ENCODE measurements at regions of chr20 and their contacts with region 1.

Region 1: GRCh38 chr20:32207626-32208498 is at the starts of genes PLAGL2 and POFUT1:
- DNase-seq: peak; percentile 36 to 93
- H3K4me3 ChIP-seq: peak within 1 kb of the TSS; percentile 95 to 97
- H3K27ac ChIP-seq: peak within 1 kb of the TSS; percentile 77 to 78
- H3K4me1 ChIP-seq: peaks cover 0 to 33% of the 10 kb centered on the region in 2 donors
- H3K27me3 ChIP-seq: no peaks in the 10 kb centered on the region
- CTCF ChIP-seq: peak in 1 of 3 experiments; percentile 13
- total RNA-seq, gene PLAGL2: 6.7 TPM
- total RNA-seq, gene POFUT1: 29.8 TPM

Region 2: DNA sequence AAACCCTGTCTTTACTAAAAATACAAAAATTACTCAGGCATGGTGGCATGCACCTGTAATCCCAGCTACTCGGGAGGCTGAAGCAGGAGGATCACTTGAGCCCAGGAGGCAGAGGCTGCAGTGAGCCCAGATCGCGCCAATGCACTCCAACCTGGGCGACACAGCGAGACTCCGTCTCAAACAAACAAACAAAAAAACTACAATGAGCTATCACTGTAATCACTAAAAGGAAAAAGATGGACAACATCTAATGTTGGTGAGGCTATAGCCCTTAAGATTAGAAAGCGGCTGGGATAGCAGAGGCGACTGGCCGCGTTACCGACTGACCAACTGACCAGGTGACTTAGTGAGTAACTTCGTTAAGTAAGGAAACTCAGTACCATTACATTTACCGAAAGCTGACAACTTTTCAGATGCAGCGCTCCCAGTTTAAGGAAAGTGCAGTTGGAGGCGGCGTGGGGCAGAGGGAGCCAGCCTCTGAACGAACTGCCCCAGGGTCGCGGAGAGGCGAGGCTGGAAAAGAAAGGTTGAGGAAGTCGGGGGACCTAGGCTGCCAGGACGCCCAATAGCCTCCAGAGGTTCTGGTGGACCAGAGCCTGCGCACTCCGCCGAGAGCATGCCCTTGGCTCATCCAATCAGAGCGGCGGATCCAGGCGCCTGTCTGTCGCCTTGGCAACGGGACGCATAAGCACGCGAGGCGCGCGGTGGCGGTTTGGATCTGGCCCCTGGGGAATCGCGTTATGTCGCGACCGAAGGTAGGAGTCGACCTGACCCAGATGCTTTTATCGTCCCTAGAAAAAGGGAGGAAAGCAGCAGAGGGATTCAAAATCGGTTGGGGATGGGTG is 328.5 kb before region 1 on chr20:
- intact Hi-C with region 1: loop called (anchors 10 kb)
- DNase-seq: peak; percentile 87 to 98
- H3K4me3 ChIP-seq: peak overlapping the region; percentile 62 to 63
- H3K27ac ChIP-seq: peak overlapping the region; percentile 59 to 76
- H3K4me1 ChIP-seq: peaks cover 0 to 4% of the 10 kb centered on the region in 2 donors
- H3K27me3 ChIP-seq: no peaks in the 10 kb centered on the region
- CTCF ChIP-seq: peak in 1 of 3 experiments; percentile 16

Region 3: GRCh38 chr20:32109392-32110172 is 98.3 kb before region 1 on chr20 and contains the start of gene TM9SF4:
- intact Hi-C with region 1: loop called (anchors 1 kb)
- DNase-seq: peak; percentile 51 to 94
- H3K4me3 ChIP-seq: peak within 1 kb of the TSS; percentile 88 to 93
- H3K27ac ChIP-seq: peak within 1 kb of the TSS; percentile 99 to 100
- H3K4me1 ChIP-seq: peaks cover 8 to 20% of the 10 kb centered on the region in 2 donors
- H3K27me3 ChIP-seq: no peaks in the 10 kb centered on the region
- CTCF ChIP-seq: no peak
- total RNA-seq, gene TM9SF4: 29.2 TPM

Region 4: GRCh38 chr20:32249030-32249738 is 41.3 kb after region 1 on chr20:
- intact Hi-C with region 1: no loop called
- DNase-seq: no peak
- H3K4me3 ChIP-seq: no peak overlapping the region
- H3K27ac ChIP-seq: no peak overlapping the region
- H3K4me1 ChIP-seq: no peaks in the 10 kb centered on the region
- H3K27me3 ChIP-seq: no peaks in the 10 kb centered on the region
- CTCF ChIP-seq: no peak

Region 5: GRCh38 chr20:32277361-32278198 is 69.7 kb after region 1 on chr20 and contains the start of gene KIF3B:
- intact Hi-C with region 1: loop called (anchors 5 kb)
- DNase-seq: peak; percentile 54 to 92
- H3K4me3 ChIP-seq: peak within 1 kb of the TSS; percentile 87 to 94
- H3K27ac ChIP-seq: peak within 1 kb of the TSS; percentile 65 to 67
- H3K4me1 ChIP-seq: peaks cover 0 to 13% of the 10 kb centered on the region in 2 donors
- H3K27me3 ChIP-seq: no peaks in the 10 kb centered on the region
- CTCF ChIP-seq: peak in 1 of 3 experiments; percentile 4
- total RNA-seq, gene KIF3B: 20.1 TPM

Region 6: DNA sequence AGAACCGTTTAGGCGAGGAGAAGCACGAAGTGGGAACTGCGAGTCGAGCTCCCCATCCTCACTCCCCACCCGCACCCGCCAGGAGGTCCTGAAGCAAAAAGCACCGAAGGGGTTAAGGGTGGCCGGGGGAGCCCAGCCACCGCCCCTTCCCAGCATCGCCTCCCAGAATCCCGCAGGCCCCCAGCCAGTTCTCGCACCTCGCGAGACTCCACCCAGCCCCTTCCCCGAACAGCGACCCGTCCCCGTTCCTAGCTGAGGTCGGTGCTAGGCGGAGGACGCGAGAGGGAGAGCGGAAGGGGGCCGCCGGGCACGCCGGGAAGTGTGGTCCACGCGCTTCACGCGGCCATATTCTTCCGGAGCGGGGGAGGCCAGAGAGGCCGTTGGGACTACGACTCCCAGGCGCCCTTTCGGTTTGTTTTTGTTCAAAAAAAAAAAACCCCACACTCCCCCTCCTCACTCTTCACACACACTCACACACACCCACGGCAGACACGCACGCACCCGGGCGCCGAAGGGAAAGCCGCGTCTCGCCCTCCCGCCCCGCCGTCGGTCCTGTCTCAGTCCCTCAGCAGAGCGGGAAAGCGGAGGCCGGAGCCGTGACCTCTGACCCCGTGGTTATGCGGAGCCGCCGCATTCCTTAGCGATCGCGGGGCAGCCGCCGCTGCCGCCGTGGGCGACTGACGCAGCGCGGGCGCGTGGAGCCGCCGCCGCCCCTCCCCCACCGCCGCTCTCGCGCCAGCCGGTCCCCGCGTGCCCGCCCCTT is 150.2 kb after region 1 on chr20 and contains the start of gene ASXL1:
- intact Hi-C with region 1: loop called (anchors 1 kb)
- DNase-seq: peak; percentile 84 to 98
- H3K4me3 ChIP-seq: peak within 1 kb of the TSS; percentile 70 to 77
- H3K27ac ChIP-seq: peak within 1 kb of the TSS; percentile 96
- H3K4me1 ChIP-seq: peaks cover 0 to 19% of the 10 kb centered on the region in 2 donors
- H3K27me3 ChIP-seq: no peaks in the 10 kb centered on the region
- CTCF ChIP-seq: no peak
- total RNA-seq, gene ASXL1: 37.4 TPM

Region 7: GRCh38 chr20:32484958-32485769 is 277.3 kb after region 1 on chr20:
- intact Hi-C with region 1: loop called (anchors 1 kb)
- DNase-seq: peak; percentile 51 to 87
- H3K4me3 ChIP-seq: peak overlapping the region; percentile 88 to 96
- H3K27ac ChIP-seq: peak overlapping the region; percentile 55 to 64
- H3K4me1 ChIP-seq: peaks cover 0 to 11% of the 10 kb centered on the region in 2 donors
- H3K27me3 ChIP-seq: no peaks in the 10 kb centered on the region
- CTCF ChIP-seq: peak; percentile 69 to 81 (median 74)

Region 8: GRCh38 chr20:32789896-32790750 is 582.3 kb after region 1 on chr20:
- intact Hi-C with region 1: no loop called
- DNase-seq: peak in 1 of 2 donors; percentile 74
- H3K4me3 ChIP-seq: no peak overlapping the region
- H3K27ac ChIP-seq: no peak overlapping the region
- H3K4me1 ChIP-seq: no peaks in the 10 kb centered on the region
- H3K27me3 ChIP-seq: no peaks in the 10 kb centered on the region
- CTCF ChIP-seq: peak; percentile 82 to 99 (median 99)